CD8-positive, alpha-beta T cell (primary cell): ENCODE measurements at regions of chr1 and their contacts with region 1.

Region 1: DNA sequence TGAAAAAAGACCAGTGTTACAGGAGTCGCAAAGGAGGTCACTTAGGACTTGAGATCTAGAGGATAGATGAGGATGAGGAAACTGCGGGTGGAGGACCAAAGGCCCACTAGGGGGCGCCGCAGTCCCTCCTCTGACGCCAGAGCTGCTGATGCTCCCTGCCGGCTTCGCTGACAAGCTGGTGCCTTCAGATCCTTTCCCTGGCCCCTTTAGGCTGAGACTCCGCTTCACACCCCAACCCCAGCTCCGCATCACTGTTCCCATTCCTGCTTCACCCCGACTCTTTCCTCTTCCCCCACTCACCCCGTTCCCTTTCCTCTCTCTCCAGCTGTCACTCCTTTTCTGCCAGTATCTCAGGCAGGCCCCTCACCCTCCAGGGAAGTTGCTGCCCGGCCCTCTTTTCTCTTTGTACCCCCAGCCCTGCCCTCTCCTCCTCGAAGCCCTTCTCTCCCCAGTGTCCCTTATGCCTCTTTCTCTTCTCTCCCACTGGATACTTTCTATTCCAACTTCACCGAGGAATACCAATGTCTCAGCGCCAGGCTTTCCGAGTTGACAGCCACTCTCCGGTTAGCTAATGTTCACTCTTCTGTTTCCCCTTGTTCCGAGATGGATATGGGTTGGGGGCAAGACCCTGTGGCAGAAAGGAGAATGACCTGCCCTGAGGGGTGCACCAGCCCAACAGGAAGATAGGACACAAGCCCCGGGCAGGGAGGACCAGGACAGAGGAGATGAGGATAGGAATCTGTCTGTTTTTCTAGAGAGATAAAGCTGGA is 4.5 kb downstream of the KCNJ9 start:
- DNase-seq: peak; percentile 58 to 86 (median 81)
- ATAC-seq: peak; percentile 74
- H3K4me3 ChIP-seq: no peak overlapping the region
- H3K4me3 Mint-ChIP-seq: peak overlapping the region; percentile 32
- H3K27ac ChIP-seq: no peak overlapping the region
- H3K27ac Mint-ChIP-seq: peak overlapping the region; percentile 46
- H3K4me1 ChIP-seq: peaks cover 10% of the 10 kb centered on the region
- H3K4me1 Mint-ChIP-seq: peaks cover 20% of the 10 kb centered on the region
- H3K27me3 ChIP-seq: peaks cover 5 to 13% of the 10 kb centered on the region in 2 experiments
- H3K27me3 Mint-ChIP-seq: peaks cover 15% of the 10 kb centered on the region
- CTCF ChIP-seq: peak; percentile 81

Region 2: GRCh38 chr1:159598196-159598595 is 487.7 kb before region 1 on chr1:
- CTCF ChIA-PET with region 1: no interaction called
- POLR2A ChIA-PET with region 1: no interaction called
- intact Hi-C with region 1: no loop called
- DNase-seq: no peak
- ATAC-seq: no peak
- H3K4me3 ChIP-seq: no peak overlapping the region
- H3K4me3 Mint-ChIP-seq: no peak overlapping the region
- H3K27ac ChIP-seq: no peak overlapping the region
- H3K27ac Mint-ChIP-seq: no peak overlapping the region
- H3K4me1 ChIP-seq: no peaks in the 10 kb centered on the region
- H3K4me1 Mint-ChIP-seq: no peaks in the 10 kb centered on the region
- H3K27me3 ChIP-seq: no peaks in the 10 kb centered on the region
- H3K27me3 Mint-ChIP-seq: peaks cover 47% of the 10 kb centered on the region
- CTCF ChIP-seq: no peak

Region 3: GRCh38 chr1:159936273-159936904 is 149.5 kb before region 1 on chr1:
- CTCF ChIA-PET with region 1: interaction called, 6 read pairs
- POLR2A ChIA-PET with region 1: no interaction called
- intact Hi-C with region 1: loop called (anchors 1 kb)
- DNase-seq: peak; percentile 66 to 90 (median 82)
- ATAC-seq: peak; percentile 96
- H3K4me3 ChIP-seq: no peak overlapping the region
- H3K4me3 Mint-ChIP-seq: no peak overlapping the region
- H3K27ac ChIP-seq: no peak overlapping the region
- H3K27ac Mint-ChIP-seq: no peak overlapping the region
- H3K4me1 ChIP-seq: peaks cover 4% of the 10 kb centered on the region
- H3K4me1 Mint-ChIP-seq: peaks cover 6% of the 10 kb centered on the region
- H3K27me3 ChIP-seq: no peaks in the 10 kb centered on the region
- H3K27me3 Mint-ChIP-seq: peaks cover 11% of the 10 kb centered on the region
- CTCF ChIP-seq: peak; percentile 97

Region 4: DNA sequence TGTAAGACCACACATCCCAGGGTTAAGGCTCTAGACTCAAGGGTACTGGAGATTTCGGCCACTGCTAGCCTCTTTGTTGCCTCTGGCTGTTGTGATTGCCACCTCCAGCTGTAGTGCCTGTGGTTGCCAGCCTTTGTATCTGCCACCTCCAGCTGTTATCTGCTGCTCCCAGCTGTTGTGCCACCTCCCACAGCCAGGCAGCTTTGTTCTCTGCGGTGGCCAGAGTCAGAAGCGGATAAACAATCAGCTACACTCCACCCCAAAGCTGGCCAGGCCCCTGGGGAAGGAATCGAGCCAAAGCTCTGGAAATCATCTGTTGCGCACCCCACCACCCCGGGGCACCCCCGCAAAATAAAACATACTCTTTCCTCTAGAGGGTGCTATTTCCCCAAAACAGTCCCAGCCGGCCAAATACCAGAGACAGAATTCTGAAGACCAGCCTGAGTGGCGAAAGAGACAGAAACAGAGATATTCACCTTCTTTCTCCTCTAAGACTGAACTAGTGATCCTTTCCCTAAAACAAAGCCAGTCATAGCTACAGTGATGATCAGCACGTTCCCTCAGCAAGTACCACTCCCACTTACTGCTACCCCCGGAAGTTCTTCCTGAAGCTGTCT is 39.3 kb before region 1 on chr1:
- CTCF ChIA-PET with region 1: interaction called, 320 read pairs
- POLR2A ChIA-PET with region 1: no interaction called
- intact Hi-C with region 1: loop called (anchors 1 to 2 kb)
- DNase-seq: peak in 7 of 9 experiments; percentile 11 to 66 (median 36)
- ATAC-seq: peak; percentile 80
- H3K4me3 ChIP-seq: peak overlapping the region in 1 of 2 experiments; percentile 24
- H3K4me3 Mint-ChIP-seq: peak overlapping the region; percentile 76
- H3K27ac ChIP-seq: no peak overlapping the region
- H3K27ac Mint-ChIP-seq: no peak overlapping the region
- H3K4me1 ChIP-seq: peaks cover 6% of the 10 kb centered on the region
- H3K4me1 Mint-ChIP-seq: peaks cover 12% of the 10 kb centered on the region
- H3K27me3 ChIP-seq: peaks cover 0 to 2% of the 10 kb centered on the region in 2 experiments
- H3K27me3 Mint-ChIP-seq: peaks cover 17% of the 10 kb centered on the region
- CTCF ChIP-seq: peak; percentile 46

Region 5: GRCh38 chr1:160070243-160071163 is 15.4 kb before region 1 on chr1:
- CTCF ChIA-PET with region 1: interaction called, 56 read pairs
- POLR2A ChIA-PET with region 1: no interaction called
- intact Hi-C with region 1: loop called in 1 of 2 experiments (anchors 1 kb)
- DNase-seq: peak; percentile 57 to 86 (median 83)
- ATAC-seq: peak; percentile 98
- H3K4me3 ChIP-seq: peak overlapping the region; percentile 50 to 53
- H3K4me3 Mint-ChIP-seq: peak overlapping the region; percentile 87
- H3K27ac ChIP-seq: no peak overlapping the region
- H3K27ac Mint-ChIP-seq: no peak overlapping the region
- H3K4me1 ChIP-seq: peaks cover 10% of the 10 kb centered on the region
- H3K4me1 Mint-ChIP-seq: peaks cover 10% of the 10 kb centered on the region
- H3K27me3 ChIP-seq: peaks cover 3 to 4% of the 10 kb centered on the region in 2 experiments
- H3K27me3 Mint-ChIP-seq: peaks cover 23% of the 10 kb centered on the region
- CTCF ChIP-seq: no peak

Region 6: GRCh38 chr1:160251687-160252526 is 166.0 kb after region 1 on chr1:
- CTCF ChIA-PET with region 1: interaction called, 27 read pairs
- POLR2A ChIA-PET with region 1: no interaction called
- intact Hi-C with region 1: loop called (anchors 1 kb)
- DNase-seq: peak; percentile 17 to 76 (median 57)
- ATAC-seq: peak; percentile 99
- H3K4me3 ChIP-seq: no peak overlapping the region
- H3K4me3 Mint-ChIP-seq: no peak overlapping the region
- H3K27ac ChIP-seq: no peak overlapping the region
- H3K27ac Mint-ChIP-seq: peak overlapping the region; percentile 80
- H3K4me1 ChIP-seq: no peaks in the 10 kb centered on the region
- H3K4me1 Mint-ChIP-seq: peaks cover 23% of the 10 kb centered on the region
- H3K27me3 ChIP-seq: no peaks in the 10 kb centered on the region
- H3K27me3 Mint-ChIP-seq: no peaks in the 10 kb centered on the region
- CTCF ChIP-seq: peak; percentile 64